Activated CD4-positive, alpha-beta T cell treated with anti-CD3 and anti-CD28 coated beads for 36 hours (primary cell): ENCODE measurements at regions of chr20 and their contacts with region 1.

Region 1: DNA sequence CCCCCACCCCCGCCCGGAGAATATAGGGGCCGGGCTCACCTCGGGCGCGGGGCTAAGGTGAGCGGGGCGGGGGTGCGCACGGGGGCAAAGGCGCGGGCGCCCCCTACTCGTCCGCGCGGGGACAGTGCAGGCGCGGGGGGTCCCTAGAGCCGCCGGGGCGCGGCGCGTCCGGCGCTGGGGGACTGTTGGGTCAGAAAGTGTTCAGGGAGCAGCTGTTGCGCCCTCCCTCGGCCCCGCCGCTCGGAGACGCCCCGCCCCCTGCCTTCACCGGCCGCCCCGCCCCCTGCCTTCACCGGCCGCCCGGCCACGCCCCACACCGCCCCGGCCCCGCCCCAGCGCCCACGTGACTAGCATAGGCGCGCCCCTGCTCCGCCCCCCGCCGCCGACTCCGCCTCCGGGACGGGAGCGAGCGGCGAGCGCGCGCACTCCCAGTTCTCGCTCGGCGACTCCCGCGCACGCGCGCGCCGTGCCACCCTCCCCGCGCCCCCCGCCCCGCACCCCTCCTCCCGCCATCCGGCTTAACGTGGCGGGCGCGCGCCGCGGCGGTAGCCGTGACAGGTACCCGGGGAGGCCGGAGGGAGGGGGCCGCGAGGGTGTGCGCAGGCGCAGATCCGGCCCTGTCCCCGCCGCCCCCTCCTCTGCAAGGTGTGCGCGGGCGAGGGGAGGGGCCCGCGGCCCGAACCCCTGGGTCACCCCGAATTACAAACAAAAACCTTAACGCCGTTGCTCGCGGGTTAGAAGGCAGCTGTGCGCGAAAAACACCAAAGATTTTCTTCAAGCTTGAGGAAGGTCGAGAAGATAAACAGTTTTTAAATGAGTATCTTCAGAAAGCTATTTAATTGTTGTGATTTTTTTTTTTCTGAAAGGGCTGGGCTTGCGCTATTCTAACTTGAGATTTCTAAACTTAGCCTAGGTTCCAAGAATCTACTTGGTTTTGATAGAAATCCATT is 704 bp upstream of the ZNF217 start:
- DNase-seq: peak; percentile 99
- ATAC-seq: peak; percentile 62
- H3K4me3 Mint-ChIP-seq: peak overlapping the region; percentile 97
- H3K27ac Mint-ChIP-seq: peak overlapping the region; percentile 95
- H3K4me1 Mint-ChIP-seq: peaks cover 47% of the 10 kb centered on the region
- H3K27me3 Mint-ChIP-seq: no peaks in the 10 kb centered on the region

Region 2: DNA sequence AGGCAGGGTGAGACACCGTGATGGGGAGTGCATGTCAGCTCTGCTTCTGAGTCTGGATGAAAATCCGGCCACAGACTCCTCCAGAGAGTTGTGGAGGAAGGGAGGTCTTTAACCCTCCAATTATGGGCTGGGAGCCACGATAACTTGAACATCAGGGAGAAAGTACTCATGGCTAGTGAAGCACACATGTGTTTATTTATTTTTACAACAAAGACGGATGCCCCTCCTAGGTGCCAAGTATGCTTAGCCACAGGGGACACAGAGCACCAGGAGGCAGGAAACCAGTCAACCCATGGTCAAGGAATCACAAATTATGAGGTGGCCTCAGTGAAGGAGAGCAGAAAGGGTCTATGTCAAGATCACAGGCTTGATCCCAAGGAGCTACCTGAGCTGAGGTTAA is 54.8 kb before region 1 on chr20:
- CTCF ChIA-PET with region 1: no interaction called
- POLR2A ChIA-PET with region 1: no interaction called
- intact Hi-C with region 1: no loop called
- DNase-seq: no peak
- ATAC-seq: no peak
- H3K4me3 Mint-ChIP-seq: no peak overlapping the region
- H3K27ac Mint-ChIP-seq: no peak overlapping the region
- H3K4me1 Mint-ChIP-seq: no peaks in the 10 kb centered on the region
- H3K27me3 Mint-ChIP-seq: no peaks in the 10 kb centered on the region

Region 3: DNA sequence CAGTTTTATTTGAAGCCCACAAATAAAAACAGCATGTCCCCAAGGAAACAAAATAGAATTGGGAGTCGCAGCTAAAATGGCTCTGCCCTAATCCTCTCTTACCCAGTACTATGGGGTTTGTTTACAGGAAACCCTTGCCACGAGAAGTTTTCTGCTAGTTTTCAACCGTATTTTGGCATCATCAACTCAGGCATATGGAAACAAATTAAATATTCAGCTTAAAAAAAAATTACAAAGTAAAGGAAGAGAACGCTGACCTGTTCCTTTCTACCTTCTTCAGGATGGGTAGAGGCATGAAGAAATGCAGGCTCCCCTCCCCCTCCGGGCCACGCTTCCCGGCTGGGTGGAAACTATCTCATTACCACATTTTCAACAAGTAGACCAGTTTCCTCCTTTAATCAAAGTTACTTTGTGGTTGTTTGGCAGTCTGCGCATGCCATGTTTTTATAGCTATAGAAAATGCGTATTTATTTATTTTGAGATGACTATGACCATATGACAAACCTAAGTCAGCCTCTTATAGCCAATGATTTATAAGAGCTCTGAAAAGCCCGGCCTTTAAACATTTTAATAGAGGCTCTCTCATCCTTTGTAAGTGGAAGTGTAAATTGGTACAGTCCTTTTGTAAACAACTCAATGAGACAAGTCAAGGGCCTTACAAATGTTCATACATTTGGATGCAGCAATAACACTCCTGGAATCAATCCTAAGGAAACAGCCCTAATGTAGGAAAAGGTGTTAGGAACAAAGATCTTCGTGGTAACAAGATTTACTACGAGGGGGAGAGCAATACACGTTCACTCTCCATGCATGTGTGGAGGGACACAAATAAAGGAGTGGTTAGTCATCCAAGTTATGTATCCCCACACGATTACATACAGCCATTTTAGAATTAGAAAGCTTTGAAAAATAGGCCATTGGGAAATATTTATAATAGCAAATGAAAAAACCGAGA is 15.4 kb after region 1 on chr20:
- CTCF ChIA-PET with region 1: interaction called, 11 read pairs
- POLR2A ChIA-PET with region 1: interaction called, 3 read pairs
- intact Hi-C with region 1: loop called (anchors 1 to 2 kb)
- DNase-seq: peak; percentile 87
- ATAC-seq: peak; percentile 82
- H3K4me3 Mint-ChIP-seq: peak overlapping the region; percentile 77
- H3K27ac Mint-ChIP-seq: peak overlapping the region; percentile 98
- H3K4me1 Mint-ChIP-seq: peaks cover 36% of the 10 kb centered on the region
- H3K27me3 Mint-ChIP-seq: no peaks in the 10 kb centered on the region

Region 4: GRCh38 chr20:53623454-53624211 is 29.3 kb after region 1 on chr20:
- CTCF ChIA-PET with region 1: interaction called, 10 read pairs
- POLR2A ChIA-PET with region 1: interaction called, 4 read pairs
- intact Hi-C with region 1: loop called in 1 of 2 experiments (anchors 2 kb)
- DNase-seq: peak; percentile 65
- ATAC-seq: peak; percentile 78
- H3K4me3 Mint-ChIP-seq: peak overlapping the region; percentile 67
- H3K27ac Mint-ChIP-seq: peak overlapping the region; percentile 97
- H3K4me1 Mint-ChIP-seq: peaks cover 37% of the 10 kb centered on the region
- H3K27me3 Mint-ChIP-seq: no peaks in the 10 kb centered on the region

Region 5: GRCh38 chr20:53652090-53652858 is 57.9 kb after region 1 on chr20:
- CTCF ChIA-PET with region 1: no interaction called
- POLR2A ChIA-PET with region 1: no interaction called
- intact Hi-C with region 1: loop called in 1 of 2 experiments (anchors 2 kb)
- DNase-seq: no peak
- ATAC-seq: peak; percentile 77
- H3K4me3 Mint-ChIP-seq: peak overlapping the region; percentile 61
- H3K27ac Mint-ChIP-seq: peak overlapping the region; percentile 95
- H3K4me1 Mint-ChIP-seq: peaks cover 41% of the 10 kb centered on the region
- H3K27me3 Mint-ChIP-seq: no peaks in the 10 kb centered on the region

Region 6: DNA sequence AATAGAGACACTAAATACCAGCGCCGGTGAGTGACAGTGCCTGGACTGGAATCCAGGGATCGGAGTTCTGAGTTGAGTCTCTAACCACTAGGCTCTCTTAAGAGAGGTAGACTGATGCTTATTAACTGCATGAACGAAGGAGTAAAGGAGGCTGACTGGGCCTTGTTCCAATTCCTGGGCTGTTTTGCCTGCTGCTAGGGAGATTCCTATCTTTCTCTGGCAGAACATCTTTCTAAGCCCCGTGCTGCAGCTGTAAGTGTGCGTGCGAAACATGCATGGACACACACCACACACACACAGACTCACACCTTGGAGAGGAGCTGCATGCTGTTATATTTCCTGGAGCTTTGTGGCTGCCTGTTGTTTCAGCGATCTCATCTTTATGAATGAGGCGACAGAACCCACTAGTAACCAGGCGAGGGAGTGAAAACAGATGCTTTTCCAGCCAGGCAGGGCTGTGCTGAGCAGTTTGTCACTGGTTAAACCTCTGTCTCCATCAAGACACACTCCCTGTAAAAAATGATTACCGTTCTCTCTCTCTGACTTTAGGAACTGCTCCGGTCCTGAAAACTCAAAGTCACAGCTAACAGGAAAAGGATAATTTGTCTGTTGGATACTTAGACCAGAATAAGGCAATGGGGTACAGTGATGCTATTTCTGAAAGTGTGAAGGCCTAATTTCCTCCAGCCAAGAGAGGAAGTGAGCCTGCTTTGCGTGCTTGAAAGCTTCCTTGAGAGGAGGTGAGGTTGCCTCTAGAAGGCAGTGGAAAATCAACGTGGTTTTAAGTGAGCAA is 156.7 kb after region 1 on chr20:
- CTCF ChIA-PET with region 1: interaction called, 3 read pairs
- POLR2A ChIA-PET with region 1: no interaction called
- intact Hi-C with region 1: loop called in 1 of 2 experiments (anchors 5 kb)
- DNase-seq: peak; percentile 60
- ATAC-seq: peak; percentile 70
- H3K4me3 Mint-ChIP-seq: peak overlapping the region; percentile 22
- H3K27ac Mint-ChIP-seq: peak overlapping the region; percentile 96
- H3K4me1 Mint-ChIP-seq: peaks cover 73% of the 10 kb centered on the region
- H3K27me3 Mint-ChIP-seq: no peaks in the 10 kb centered on the region